ENCODE measurements at regions of chr5 and their contacts with region 1.

Region 1: DNA sequence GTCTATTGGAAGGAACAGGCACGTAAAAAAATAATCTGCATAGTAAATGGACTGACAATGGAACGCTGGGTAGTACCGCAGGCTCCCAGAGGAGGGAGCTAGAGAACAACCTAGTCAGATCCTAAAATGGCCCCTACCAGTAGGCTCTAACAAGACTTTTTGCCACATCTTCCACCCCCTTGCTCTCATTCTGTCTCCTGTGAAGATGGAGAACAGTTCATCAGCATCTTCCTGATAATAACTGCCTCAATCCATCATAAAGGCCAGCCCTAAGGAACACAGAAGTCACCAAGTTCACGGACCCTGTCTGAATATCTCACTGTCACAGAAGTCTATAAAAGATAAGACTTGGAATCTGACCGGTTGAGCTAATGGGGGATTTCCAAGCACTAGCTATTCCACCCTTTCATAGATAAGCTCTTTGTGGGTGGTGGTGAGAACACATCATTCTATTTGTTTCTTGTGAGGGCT is 133.4 kb downstream of the SLC1A3 start:
- DNase-seq: peak; percentile 10
- H3K4me3 ChIP-seq: no peak overlapping the region
- H3K27ac ChIP-seq: no peak overlapping the region
- H3K27me3 ChIP-seq: peaks cover 12% of the 10 kb centered on the region
- CTCF ChIP-seq: peak; percentile 79

Region 2: DNA sequence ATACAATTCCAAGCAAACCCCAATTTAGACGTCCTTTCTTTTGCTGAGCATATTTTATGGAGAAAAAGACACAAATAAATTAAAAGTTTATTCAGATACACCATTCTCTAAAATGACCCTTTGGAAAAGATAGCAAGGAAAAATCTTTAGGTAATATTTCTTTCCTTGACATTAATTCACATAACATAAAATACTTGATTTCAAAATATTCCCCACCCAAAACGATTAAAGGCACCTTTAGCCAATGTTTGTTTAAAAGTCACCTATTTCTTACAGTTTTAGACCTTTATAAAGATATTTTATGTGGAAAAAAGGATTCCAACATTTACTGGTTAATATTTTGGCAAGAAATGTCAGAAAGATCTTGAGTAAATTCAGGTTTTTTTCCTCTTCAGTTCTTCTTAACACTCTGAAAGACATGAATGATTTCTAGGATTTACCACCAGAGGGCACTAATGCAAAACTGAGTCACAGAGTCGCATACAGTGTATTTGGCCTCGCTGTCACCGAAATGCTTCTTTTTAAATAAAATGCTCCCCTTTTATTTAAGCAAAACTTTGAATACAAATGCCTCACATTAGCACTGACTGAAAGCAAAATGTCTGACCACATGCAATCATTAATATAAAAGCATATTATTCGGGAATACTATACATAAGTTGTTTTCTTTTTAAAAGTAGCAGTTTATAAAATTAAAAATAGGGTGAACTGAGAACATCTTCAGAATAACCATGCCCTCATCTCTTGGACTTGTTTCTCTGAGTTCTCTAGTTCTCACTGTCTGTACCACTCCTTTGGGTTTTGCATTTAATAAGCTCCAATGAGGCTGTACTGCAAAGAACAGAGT is 10.9 kb before region 1 on chr5:
- CTCF ChIA-PET with region 1: interaction called, 28 read pairs
- POLR2A ChIA-PET with region 1: no interaction called
- DNase-seq: peak; percentile 41
- H3K4me3 ChIP-seq: no peak overlapping the region
- H3K27ac ChIP-seq: no peak overlapping the region
- H3K27me3 ChIP-seq: peaks cover 3% of the 10 kb centered on the region
- CTCF ChIP-seq: peak; percentile 71

Region 3: GRCh38 chr5:36751886-36752285 is 12.1 kb after region 1 on chr5:
- CTCF ChIA-PET with region 1: interaction called, 11 read pairs
- POLR2A ChIA-PET with region 1: no interaction called
- DNase-seq: no peak
- H3K4me3 ChIP-seq: no peak overlapping the region
- H3K27ac ChIP-seq: no peak overlapping the region
- H3K27me3 ChIP-seq: peaks cover 19% of the 10 kb centered on the region
- CTCF ChIP-seq: peak; percentile 20; the same call in 1 of the 2 replicates

Region 4: GRCh38 chr5:36870399-36871040 is 130.7 kb after region 1 on chr5:
- CTCF ChIA-PET with region 1: interaction called, 12 read pairs
- POLR2A ChIA-PET with region 1: no interaction called
- DNase-seq: no peak
- H3K4me3 ChIP-seq: no peak overlapping the region
- H3K27ac ChIP-seq: no peak overlapping the region
- H3K27me3 ChIP-seq: no peaks in the 10 kb centered on the region
- CTCF ChIP-seq: peak; percentile 70